ENCODE measurements at regions of chr1 and their contacts with region 1.

Region 1: DNA sequence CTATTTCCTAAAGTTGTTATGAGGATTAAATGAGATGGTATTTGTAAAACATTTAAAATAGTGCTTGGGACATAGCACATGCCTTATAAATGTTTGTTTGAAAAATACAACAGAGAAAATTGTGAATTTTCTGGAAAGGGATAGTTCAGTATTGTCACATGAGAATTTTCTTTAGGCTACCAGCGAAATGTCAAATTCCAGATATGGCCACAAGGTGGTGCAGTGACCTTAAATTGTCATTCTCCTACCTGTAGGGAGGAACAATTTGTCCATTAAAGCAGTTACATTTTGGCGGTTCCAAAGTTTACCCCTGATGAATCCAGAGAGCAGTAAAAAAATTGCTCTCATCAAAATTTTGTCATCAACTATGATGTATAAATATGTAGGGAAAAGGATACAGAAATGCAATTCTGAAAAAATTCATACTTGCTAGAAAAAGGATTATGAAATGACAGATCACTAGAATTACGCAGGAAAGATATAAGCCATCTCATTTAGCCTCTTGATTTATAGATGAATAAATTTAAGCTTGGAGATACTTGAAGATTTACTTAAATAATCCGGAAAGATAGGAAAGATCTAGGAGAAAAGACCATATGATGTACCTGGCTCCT is 50.2 kb upstream of the TSHB start:
- DNase-seq: peak; percentile 65
- H3K4me3 ChIP-seq: no peak overlapping the region
- H3K27ac ChIP-seq: no peak overlapping the region
- H3K4me1 ChIP-seq: no peaks in the 10 kb centered on the region
- H3K27me3 ChIP-seq: peaks cover 14% of the 10 kb centered on the region
- CTCF ChIP-seq: peak; percentile 79

Region 2: GRCh38 chr1:114703242-114703641 is 276.1 kb before region 1 on chr1:
- CTCF ChIA-PET with region 1: no interaction called
- POLR2A ChIA-PET with region 1: no interaction called
- intact Hi-C with region 1: no loop called
- DNase-seq: no peak
- H3K4me3 ChIP-seq: no peak overlapping the region
- H3K27ac ChIP-seq: no peak overlapping the region
- H3K4me1 ChIP-seq: no peaks in the 10 kb centered on the region
- H3K27me3 ChIP-seq: no peaks in the 10 kb centered on the region
- CTCF ChIP-seq: no peak

Region 3: GRCh38 chr1:115041654-115042053 is 62.3 kb after region 1 on chr1:
- CTCF ChIA-PET with region 1: no interaction called
- POLR2A ChIA-PET with region 1: no interaction called
- intact Hi-C with region 1: loop called (anchors 5 kb)
- DNase-seq: peak; percentile 35
- H3K4me3 ChIP-seq: no peak overlapping the region
- H3K27ac ChIP-seq: no peak overlapping the region
- H3K4me1 ChIP-seq: no peaks in the 10 kb centered on the region
- H3K27me3 ChIP-seq: no peaks in the 10 kb centered on the region
- CTCF ChIP-seq: peak; percentile 50

Region 4: GRCh38 chr1:115052454-115053083 is 73.2 kb after region 1 on chr1:
- CTCF ChIA-PET with region 1: no interaction called
- POLR2A ChIA-PET with region 1: no interaction called
- intact Hi-C with region 1: loop called (anchors 1 kb)
- DNase-seq: peak; percentile 76
- H3K4me3 ChIP-seq: no peak overlapping the region
- H3K27ac ChIP-seq: no peak overlapping the region
- H3K4me1 ChIP-seq: no peaks in the 10 kb centered on the region
- H3K27me3 ChIP-seq: no peaks in the 10 kb centered on the region
- CTCF ChIP-seq: peak; percentile 94

Region 5: GRCh38 chr1:115112496-115113375 is 133.4 kb after region 1 on chr1:
- CTCF ChIA-PET with region 1: interaction called, 3 read pairs
- POLR2A ChIA-PET with region 1: no interaction called
- intact Hi-C with region 1: loop called (anchors 2 kb)
- DNase-seq: peak; percentile 40
- H3K4me3 ChIP-seq: no peak overlapping the region
- H3K27ac ChIP-seq: no peak overlapping the region
- H3K4me1 ChIP-seq: no peaks in the 10 kb centered on the region
- H3K27me3 ChIP-seq: no peaks in the 10 kb centered on the region
- CTCF ChIP-seq: peak; percentile 95

Region 6: DNA sequence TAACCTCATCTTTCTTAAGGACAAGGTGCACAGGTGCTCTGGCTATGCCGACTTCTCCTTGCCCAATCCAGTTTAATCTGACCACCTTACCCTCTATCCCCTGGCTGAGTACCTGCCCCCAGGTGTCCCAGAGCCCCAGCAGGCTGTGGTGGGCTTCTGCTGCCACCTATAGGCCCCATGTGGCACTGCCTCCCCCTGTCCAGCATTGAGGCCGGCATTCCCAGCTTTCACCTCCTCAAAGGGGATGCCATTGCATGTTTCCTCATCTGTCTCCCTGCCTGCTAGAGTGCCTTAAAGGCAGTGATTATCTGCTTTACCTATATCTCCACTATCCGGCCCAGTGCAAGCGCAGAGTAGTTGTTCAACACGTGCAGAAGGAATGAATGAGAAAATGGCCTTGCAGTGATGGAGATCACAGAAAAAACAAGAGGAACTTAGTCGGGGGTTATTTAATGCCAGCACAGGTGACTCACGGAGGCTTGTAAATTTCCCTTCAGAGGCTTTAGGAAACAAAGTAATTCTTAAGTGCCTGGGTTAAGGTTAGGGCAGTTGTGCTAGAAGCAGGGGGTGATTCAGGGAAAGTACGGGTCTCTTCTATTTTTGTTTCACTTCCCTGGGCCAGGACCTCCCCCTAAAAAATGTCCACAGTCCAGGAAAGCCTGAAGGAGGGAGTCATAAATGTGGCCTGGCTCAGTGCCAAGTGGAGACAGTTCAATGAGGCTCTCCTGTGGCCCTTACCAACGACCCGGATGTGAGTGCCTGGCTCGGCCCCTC is 490.5 kb after region 1 on chr1:
- CTCF ChIA-PET with region 1: no interaction called
- POLR2A ChIA-PET with region 1: no interaction called
- intact Hi-C with region 1: loop called (anchors 5 kb)
- DNase-seq: peak; percentile 27
- H3K4me3 ChIP-seq: no peak overlapping the region
- H3K27ac ChIP-seq: no peak overlapping the region
- H3K4me1 ChIP-seq: no peaks in the 10 kb centered on the region
- H3K27me3 ChIP-seq: peaks cover 22% of the 10 kb centered on the region
- CTCF ChIP-seq: peak; percentile 97

Measured in A673 (cell line).